ENCODE measurements at regions of chr11 and their contacts with region 1.

Region 1: DNA sequence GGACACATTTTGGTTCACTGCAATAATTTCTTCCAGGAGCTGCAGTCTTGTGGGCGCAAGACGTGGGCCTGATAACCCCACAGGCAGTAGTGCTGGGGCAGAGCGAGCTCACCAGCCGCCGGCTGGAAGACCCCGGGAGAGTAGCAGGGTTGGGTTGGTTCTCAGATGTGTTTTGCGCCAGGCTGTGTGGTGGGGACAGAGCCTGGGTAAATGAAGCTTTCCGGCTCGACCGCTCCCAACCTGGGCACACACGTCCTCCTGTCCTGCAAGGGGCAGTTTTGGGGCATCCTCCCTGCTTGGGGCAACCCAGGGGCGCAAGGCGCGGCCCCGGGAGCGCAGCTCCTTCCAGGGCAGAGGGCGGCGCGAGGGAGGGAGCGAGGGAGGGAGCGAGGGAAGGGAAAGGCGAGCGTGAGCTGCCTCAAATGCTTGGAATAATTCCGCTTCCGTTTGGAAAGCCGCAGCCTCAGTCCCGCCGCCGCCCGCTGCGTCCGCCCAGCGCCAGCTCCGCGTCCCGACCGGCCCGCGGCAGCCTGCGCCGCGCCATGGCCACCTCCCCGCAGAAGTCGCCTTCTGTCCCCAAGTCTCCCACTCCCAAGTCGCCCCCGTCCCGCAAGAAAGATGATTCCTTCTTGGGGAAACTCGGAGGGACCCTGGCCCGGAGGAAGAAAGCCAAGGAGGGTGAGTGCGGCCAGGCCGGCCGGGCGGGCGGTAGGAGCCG is at the start of gene PARVA:
- DNase-seq: no peak
- ATAC-seq: peak; percentile 18 to 48
- H3K4me3 Mint-ChIP-seq: peak within 1 kb of the TSS; percentile 56 to 87 (median 81)
- H3K27ac Mint-ChIP-seq: peak within 1 kb of the TSS in 7 of 10 donors; percentile 29 to 83 (median 43)
- H3K4me1 Mint-ChIP-seq: peaks cover 3 to 13% (median 10%) of the 10 kb centered on the region in 4 donors
- H3K27me3 Mint-ChIP-seq: peaks cover 4 to 50% (median 21%) of the 10 kb centered on the region in 5 donors
- polyA plus RNA-seq, gene PARVA: 0.26 TPM in 1 of 3 donors, not detected in the others

Region 2: DNA sequence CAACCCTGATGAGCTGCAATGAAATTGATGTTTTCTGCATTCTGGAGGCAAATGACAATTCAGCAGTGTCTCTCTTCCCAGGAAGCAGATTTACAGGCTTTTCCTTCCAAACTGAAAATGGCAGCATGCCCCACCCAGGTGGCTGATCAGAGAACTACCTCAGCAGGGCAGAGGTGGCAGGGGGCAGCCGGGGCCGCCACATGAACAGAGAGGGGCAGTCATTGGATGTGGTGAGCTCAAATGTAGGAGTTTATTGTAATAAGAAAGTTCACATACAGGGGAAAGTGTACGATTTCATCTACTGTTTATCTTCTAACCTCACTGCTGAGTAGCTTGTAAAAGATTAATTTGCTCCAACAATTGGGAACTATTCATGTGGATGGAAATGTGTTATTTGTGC is 15.6 kb before region 1 on chr11:
- POLR2A ChIA-PET with region 1: interaction called, 24 read pairs
- DNase-seq: no peak
- ATAC-seq: no peak
- H3K4me3 Mint-ChIP-seq: peak overlapping the region in 1 of 10 donors; percentile 11
- H3K27ac Mint-ChIP-seq: peak overlapping the region in 6 of 10 donors; percentile 33 to 80 (median 61)
- H3K4me1 Mint-ChIP-seq: peaks cover 32 to 77% (median 56%) of the 10 kb centered on the region in 4 donors
- H3K27me3 Mint-ChIP-seq: peaks cover 0 to 4% (median 0%) of the 10 kb centered on the region in 5 donors